ENCODE measurements at regions of chr3 and their contacts with region 1.

Region 1: DNA sequence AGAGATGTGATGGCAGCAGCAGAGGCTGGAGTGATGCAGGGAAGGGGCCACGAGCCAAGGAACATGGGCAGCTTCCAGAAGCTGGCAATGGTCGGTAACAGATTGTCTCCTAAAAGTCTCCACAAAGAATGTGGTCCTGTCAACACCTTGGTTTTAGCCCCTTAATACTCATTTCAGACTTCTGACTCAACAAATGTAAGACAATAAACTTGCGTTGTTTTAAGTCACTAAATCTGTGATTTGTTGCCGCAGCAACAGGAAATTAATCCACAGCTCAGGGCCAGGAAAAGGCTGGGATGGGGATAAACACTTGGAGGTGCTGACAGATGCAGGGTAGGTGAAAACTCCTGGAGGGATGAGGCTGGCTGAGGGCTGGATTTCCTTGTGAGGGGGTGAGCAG is 69.9 kb downstream of the OXNAD1 start:
- DNase-seq: no peak
- ATAC-seq: no peak
- H3K4me3 ChIP-seq: no peak overlapping the region
- H3K27ac ChIP-seq: no peak overlapping the region
- H3K4me1 ChIP-seq: peaks cover 44% of the 10 kb centered on the region
- H3K27me3 ChIP-seq: no peaks in the 10 kb centered on the region
- CTCF ChIP-seq: no peak
- EP300 ChIP-seq: no peak
- POLR2A ChIP-seq: no peak
- RAD21 ChIP-seq: no peak

Region 2: GRCh38 chr3:16357186-16358147 is 22.6 kb after region 1 on chr3:
- CTCF ChIA-PET with region 1: no interaction called
- POLR2A ChIA-PET with region 1: no interaction called
- in situ Hi-C with region 1: no loop called
- intact Hi-C with region 1: loop called (anchors 1 kb)
- DNase-seq: no peak
- ATAC-seq: no peak
- H3K4me3 ChIP-seq: no peak overlapping the region
- H3K27ac ChIP-seq: no peak overlapping the region
- H3K4me1 ChIP-seq: no peaks in the 10 kb centered on the region
- H3K27me3 ChIP-seq: no peaks in the 10 kb centered on the region
- CTCF ChIP-seq: no peak
- EP300 ChIP-seq: no peak
- POLR2A ChIP-seq: no peak
- RAD21 ChIP-seq: no peak

Measured in HepG2 (cell line).